ENCODE measurements at regions of chr4 and their contacts with region 1.

Region 1: GRCh38 chr4:41644288-41644914 is 104.1 kb downstream of the PHOX2B start:
- DNase-seq: peak; percentile 26
- CTCF ChIP-seq: peak; percentile 13

Region 2: DNA sequence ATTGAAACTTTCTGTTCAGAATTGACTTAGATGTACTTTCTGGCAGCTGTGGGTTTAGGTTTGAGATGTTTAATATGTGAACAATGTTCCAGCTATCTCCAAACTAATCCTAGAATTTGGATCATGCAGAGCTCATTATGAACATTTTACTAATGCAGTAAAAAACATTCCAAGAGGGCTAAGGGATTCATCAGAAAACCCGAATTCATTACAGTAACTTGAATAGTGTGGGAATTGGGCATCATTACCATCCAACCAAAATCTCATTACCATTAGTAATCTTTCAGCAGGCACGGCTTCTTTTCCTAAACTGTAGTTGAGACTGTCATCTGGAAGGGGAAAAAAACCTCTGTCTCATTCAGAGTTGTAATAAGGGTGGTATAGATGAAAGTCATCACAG is 15.5 kb before region 1 on chr4:
- CTCF ChIA-PET with region 1: no interaction called
- POLR2A ChIA-PET with region 1: no interaction called
- DNase-seq: no peak
- CTCF ChIP-seq: no peak

Region 3: DNA sequence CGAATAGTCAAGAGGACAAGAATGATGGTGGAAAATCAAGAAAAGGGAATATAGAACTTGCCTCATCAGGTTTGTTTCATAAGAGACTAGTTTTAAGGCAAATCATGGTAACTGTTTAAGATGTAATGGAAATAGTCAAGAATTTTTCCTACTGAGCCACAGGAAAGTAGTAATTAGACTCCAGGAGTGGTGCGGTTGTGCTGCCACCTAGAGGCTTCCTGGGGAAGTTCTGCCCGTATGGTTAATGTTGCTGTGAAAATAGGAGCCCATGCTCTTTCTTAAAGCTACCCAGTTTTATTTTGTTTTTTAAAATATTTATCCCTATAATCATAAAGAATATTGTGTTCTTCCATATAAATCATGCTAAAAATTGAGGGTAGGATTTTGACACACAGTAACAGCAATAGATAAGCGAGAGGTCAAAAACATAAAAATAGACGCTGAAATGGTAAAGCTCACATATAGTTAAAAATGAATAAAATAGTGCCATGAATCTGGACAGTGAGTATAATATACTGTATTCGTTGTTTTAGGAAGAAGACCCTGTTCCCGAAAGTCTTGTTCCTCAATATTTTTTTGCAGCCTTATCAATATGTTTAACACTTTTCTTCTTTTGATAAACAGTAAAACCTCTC is 17.2 kb after region 1 on chr4:
- CTCF ChIA-PET with region 1: interaction called, 13 read pairs
- POLR2A ChIA-PET with region 1: no interaction called
- DNase-seq: peak; percentile 39
- CTCF ChIP-seq: peak; percentile 83